Breast epithelium (tissue), 4 donors: ENCODE measurements at regions of chrX and their contacts with region 1.

Region 1: GRCh38 chrX:134137341-134137740 is 99.6 kb upstream of the CCDC160 start:
- DNase-seq: no peak
- H3K4me3 ChIP-seq: no peak overlapping the region
- H3K27ac ChIP-seq: no peak overlapping the region
- H3K4me1 ChIP-seq: no peaks in the 10 kb centered on the region
- H3K27me3 ChIP-seq: peaks cover 0 to 62% of the 10 kb centered on the region in 2 donors
- CTCF ChIP-seq: no peak
- POLR2A ChIP-seq: no peak

Region 2: DNA sequence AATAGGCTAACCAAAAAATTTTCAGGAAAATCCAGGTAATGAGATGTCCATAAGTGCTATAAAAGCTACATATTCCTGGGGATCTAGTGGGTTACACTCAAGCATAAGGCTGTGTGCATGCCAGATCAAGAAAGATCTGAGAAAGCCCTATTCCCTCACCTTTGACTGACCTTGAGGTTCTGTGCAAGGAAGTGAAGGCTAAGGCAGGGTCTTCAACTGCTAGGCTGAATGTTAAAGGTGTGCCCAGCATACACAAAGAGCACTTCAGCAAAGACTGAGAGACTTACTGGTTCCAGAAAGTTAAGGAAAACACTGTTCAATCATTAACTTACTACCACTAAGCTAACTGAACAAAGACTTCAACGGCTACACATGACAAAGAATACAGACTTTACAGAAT is 421.6 kb before region 1 on chrX:
- intact Hi-C with region 1: no loop called
- DNase-seq: no peak
- H3K4me3 ChIP-seq: no peak overlapping the region
- H3K27ac ChIP-seq: no peak overlapping the region
- H3K4me1 ChIP-seq: no peaks in the 10 kb centered on the region
- H3K27me3 ChIP-seq: peaks cover 0 to 52% of the 10 kb centered on the region in 2 donors
- CTCF ChIP-seq: no peak
- POLR2A ChIP-seq: no peak

Region 3: DNA sequence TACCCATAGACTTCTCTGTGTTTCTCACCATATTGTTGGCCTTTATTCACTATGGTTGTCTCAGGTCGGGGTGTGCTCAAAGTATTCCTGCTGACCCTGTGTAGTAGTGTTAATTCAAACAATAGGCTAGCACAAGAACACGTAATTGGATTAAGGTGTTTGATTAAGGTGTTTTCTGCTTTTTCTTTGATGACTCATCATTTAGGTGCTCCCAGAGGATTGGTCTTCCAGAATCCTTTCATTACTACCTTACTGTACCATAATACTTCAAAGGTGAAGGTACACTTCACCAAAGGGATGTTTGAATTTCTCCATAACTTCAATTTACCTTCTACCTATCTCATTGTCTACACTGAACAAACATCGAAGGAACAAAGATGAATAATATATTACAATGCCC is 22.1 kb before region 1 on chrX:
- intact Hi-C with region 1: loop called (anchors 2 kb)
- DNase-seq: no peak
- H3K4me3 ChIP-seq: no peak overlapping the region
- H3K27ac ChIP-seq: no peak overlapping the region
- H3K4me1 ChIP-seq: no peaks in the 10 kb centered on the region
- H3K27me3 ChIP-seq: peaks cover 0 to 34% of the 10 kb centered on the region in 2 donors
- CTCF ChIP-seq: no peak
- POLR2A ChIP-seq: no peak